Activated T-helper 1 cell treated with anti-CD3 and anti-CD28 coated beads, Interleukin-12 subunit alpha, Interleukin-12 subunit beta, Interleukin-2, Interleukin-4 antibody, amounts not matched to agents 30 ng/mL and 10 ng/mL and 1 ng/mL, durations not matched to agents 14 hours and 24 hours and 36 hours (primary cell): ENCODE measurements at regions of chr1 and their contacts with region 1.

Region 1: GRCh38 chr1:231040019-231040799 is at the start of gene FAM89A:
- DNase-seq: peak; percentile 57
- H3K4me3 Mint-ChIP-seq: peak within 1 kb of the TSS; percentile 84
- H3K27ac Mint-ChIP-seq: peak within 1 kb of the TSS; percentile 77
- H3K4me1 Mint-ChIP-seq: peaks cover 35% of the 10 kb centered on the region
- H3K27me3 Mint-ChIP-seq: peaks cover 40% of the 10 kb centered on the region
- total RNA-seq, gene FAM89A: 23.2 and 28.0 TPM in 2 replicates

Region 2: GRCh38 chr1:230066466-230067404 is 973.5 kb before region 1 on chr1 and contains the start of gene GALNT2:
- intact Hi-C with region 1: loop called (anchors 5 kb)
- DNase-seq: peak; percentile 88
- H3K4me3 Mint-ChIP-seq: peak within 1 kb of the TSS; percentile 93
- H3K27ac Mint-ChIP-seq: peak within 1 kb of the TSS; percentile 89
- H3K4me1 Mint-ChIP-seq: peaks cover 48% of the 10 kb centered on the region
- H3K27me3 Mint-ChIP-seq: peaks cover 3% of the 10 kb centered on the region
- total RNA-seq, gene GALNT2: 67.6 and 67.9 TPM in 2 replicates

Region 3: GRCh38 chr1:230867903-230868735 is 172.1 kb before region 1 on chr1 and contains the start of gene C1orf198:
- intact Hi-C with region 1: loop called (anchors 1 kb)
- DNase-seq: peak; percentile 59
- H3K4me3 Mint-ChIP-seq: peak within 1 kb of the TSS; percentile 87
- H3K27ac Mint-ChIP-seq: peak within 1 kb of the TSS; percentile 80
- H3K4me1 Mint-ChIP-seq: peaks cover 28% of the 10 kb centered on the region
- H3K27me3 Mint-ChIP-seq: peaks cover 39% of the 10 kb centered on the region
- total RNA-seq, gene C1orf198: 14.1 and 14.6 TPM in 2 replicates

Region 4: DNA sequence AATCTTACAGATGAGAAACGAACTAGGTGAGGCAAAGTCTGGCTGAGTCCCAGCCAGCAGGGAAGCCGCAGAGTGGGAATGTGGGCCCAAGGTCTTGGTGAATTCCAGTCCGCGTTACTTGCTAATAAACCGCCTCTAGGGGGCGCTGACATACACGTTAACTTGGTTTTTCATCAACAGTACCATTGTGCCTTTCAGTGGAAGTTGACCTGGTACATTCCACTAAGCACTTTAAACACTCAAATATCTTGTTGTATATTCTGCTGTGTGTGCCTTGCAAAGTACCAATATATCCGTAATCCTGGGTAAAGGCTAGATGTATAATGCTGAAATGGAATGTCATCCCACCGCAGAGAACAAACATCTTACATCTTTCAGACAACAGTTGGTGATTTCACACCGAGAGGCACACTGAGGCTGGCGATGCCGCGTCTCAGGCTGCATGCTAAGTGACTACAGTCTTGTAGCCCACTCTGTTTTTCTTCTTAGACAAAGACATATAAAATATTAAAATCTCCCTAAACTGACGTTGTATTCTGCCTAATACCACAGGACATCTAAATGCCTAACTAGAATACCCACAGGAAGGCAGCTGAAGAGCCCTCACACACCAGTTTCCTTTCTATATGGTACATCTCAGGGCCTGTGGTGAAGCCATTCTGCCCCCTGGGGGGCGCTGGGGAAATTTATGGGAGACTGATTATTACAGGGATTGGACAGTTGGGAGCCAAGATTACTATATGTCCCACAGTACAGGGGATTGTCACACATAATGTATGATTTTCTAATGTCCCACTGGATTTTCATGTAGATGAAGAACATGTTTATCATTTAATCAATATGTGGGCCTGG is 122.7 kb before region 1 on chr1:
- intact Hi-C with region 1: loop called (anchors 2 kb)
- DNase-seq: peak; percentile 44
- H3K4me3 Mint-ChIP-seq: no peak overlapping the region
- H3K27ac Mint-ChIP-seq: no peak overlapping the region
- H3K4me1 Mint-ChIP-seq: no peaks in the 10 kb centered on the region
- H3K27me3 Mint-ChIP-seq: no peaks in the 10 kb centered on the region

Region 5: DNA sequence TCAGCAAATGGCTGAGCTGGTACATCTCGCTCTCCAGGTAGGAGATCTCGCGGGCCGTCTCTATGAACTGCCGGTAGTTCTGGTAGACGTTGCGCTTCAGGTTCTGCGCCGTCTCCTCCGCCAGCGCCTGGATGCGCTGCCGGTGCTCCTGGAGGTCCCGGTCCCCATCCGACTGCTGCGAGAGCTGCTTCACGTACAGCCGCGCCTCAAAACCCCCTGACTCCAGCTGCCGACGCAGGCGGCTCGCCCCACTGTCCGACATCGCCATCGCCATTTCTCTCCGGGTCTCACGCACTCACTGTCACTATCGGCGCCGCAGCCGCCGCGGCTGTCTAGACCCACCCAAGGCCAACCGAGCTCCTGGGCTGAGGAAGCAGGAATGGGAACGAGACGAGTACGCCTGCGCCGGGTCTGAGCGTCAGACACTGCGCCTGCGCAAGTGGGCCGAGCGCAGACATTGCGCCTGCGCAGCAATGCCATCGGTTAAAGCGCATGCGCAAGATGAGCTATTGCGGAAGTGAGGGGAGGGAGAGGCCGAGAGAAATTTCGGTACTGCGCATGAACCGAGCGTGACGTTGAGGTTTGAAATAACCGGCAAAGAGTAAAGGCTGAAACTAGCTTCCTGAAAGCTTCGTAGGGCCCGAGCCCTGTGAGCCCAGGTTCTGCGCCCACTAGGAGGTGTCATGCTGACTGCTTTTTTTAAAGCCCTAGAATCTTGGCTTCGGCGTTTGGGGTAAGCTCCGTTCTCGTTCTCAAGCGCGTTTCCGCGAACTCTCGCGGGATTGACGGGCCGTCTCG is 297.5 kb after region 1 on chr1 and contains the start of gene EXOC8:
- intact Hi-C with region 1: loop called (anchors 1 kb)
- DNase-seq: peak; percentile 99
- H3K4me3 Mint-ChIP-seq: peak within 1 kb of the TSS; percentile 98
- H3K27ac Mint-ChIP-seq: peak within 1 kb of the TSS; percentile 100
- H3K4me1 Mint-ChIP-seq: peaks cover 62% of the 10 kb centered on the region
- H3K27me3 Mint-ChIP-seq: peaks cover 3% of the 10 kb centered on the region
- total RNA-seq, gene EXOC8: 14.4 and 15.6 TPM in 2 replicates